ENCODE measurements at regions of chr11 and their contacts with region 1.

Region 1: GRCh38 chr11:131064373-131064991 is 148.2 kb upstream of the SNX19 start:
- DNase-seq: peak; percentile 25
- H3K4me3 ChIP-seq: no peak overlapping the region
- H3K27ac ChIP-seq: no peak overlapping the region
- H3K4me1 ChIP-seq: no peaks in the 10 kb centered on the region
- H3K27me3 ChIP-seq: peaks cover 85% of the 10 kb centered on the region
- CTCF ChIP-seq: peak; percentile 82

Region 2: DNA sequence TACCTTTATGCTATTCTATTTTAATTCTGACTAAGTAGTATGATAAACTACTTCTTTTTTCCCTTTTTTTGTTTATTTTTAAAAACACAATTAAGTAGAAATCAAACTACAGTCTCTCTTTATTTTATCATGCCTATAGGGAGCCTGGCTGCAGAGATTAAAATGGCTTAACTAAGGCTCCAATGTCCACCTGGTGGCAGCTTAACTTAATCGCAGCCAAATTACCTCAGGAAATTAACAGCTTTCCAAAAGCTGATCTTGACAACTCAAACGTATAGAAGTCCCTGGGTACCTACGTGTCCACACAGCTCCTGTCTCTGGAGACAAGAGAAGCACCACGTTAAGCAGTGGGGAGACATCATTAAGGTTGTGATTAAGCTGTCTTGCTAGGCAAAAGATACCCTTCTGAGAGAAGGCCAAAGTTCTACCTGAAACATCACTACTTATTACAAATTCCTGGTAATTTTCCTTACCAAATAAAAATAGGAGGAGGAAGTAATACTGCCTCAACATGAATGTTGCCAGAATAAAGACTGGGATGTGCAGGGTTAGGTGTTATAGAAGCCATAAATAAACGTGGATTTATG is 85.0 kb before region 1 on chr11:
- intact Hi-C with region 1: no loop called
- DNase-seq: no peak
- H3K4me3 ChIP-seq: no peak overlapping the region
- H3K27ac ChIP-seq: no peak overlapping the region
- H3K4me1 ChIP-seq: no peaks in the 10 kb centered on the region
- H3K27me3 ChIP-seq: peaks cover 27% of the 10 kb centered on the region
- CTCF ChIP-seq: peak; percentile 52

Region 3: GRCh38 chr11:131229221-131229620 is 164.7 kb after region 1 on chr11:
- intact Hi-C with region 1: loop called (anchors 10 kb)
- DNase-seq: no peak
- H3K4me3 ChIP-seq: no peak overlapping the region
- H3K27ac ChIP-seq: no peak overlapping the region
- H3K4me1 ChIP-seq: no peaks in the 10 kb centered on the region
- H3K27me3 ChIP-seq: peaks cover 24% of the 10 kb centered on the region
- CTCF ChIP-seq: no peak

Measured in left ventricle myocardium inferior (tissue), 1 donor.